Panc1 (cell line): ENCODE measurements at regions of chr1 and their contacts with region 1.

Region 1: GRCh38 chr1:212070720-212071302 is 35.3 kb downstream of the DTL start:
- DNase-seq: no peak
- ATAC-seq: peak; percentile 78
- H3K4me3 ChIP-seq: no peak overlapping the region
- H3K27ac ChIP-seq: no peak overlapping the region
- H3K4me1 ChIP-seq: no peaks in the 10 kb centered on the region
- H3K27me3 ChIP-seq: no peaks in the 10 kb centered on the region
- CTCF ChIP-seq: peak; percentile 65; the same call in 1 of the 2 replicates

Region 2: GRCh38 chr1:211991695-211992094 is 79.1 kb before region 1 on chr1:
- CTCF ChIA-PET with region 1: no interaction called
- POLR2A ChIA-PET with region 1: interaction called, 12 read pairs
- in situ Hi-C with region 1: no loop called
- intact Hi-C with region 1: no loop called
- DNase-seq: no peak
- ATAC-seq: no peak
- H3K4me3 ChIP-seq: no peak overlapping the region
- H3K27ac ChIP-seq: no peak overlapping the region
- H3K4me1 ChIP-seq: no peaks in the 10 kb centered on the region
- H3K27me3 ChIP-seq: no peaks in the 10 kb centered on the region
- CTCF ChIP-seq: no peak

Region 3: DNA sequence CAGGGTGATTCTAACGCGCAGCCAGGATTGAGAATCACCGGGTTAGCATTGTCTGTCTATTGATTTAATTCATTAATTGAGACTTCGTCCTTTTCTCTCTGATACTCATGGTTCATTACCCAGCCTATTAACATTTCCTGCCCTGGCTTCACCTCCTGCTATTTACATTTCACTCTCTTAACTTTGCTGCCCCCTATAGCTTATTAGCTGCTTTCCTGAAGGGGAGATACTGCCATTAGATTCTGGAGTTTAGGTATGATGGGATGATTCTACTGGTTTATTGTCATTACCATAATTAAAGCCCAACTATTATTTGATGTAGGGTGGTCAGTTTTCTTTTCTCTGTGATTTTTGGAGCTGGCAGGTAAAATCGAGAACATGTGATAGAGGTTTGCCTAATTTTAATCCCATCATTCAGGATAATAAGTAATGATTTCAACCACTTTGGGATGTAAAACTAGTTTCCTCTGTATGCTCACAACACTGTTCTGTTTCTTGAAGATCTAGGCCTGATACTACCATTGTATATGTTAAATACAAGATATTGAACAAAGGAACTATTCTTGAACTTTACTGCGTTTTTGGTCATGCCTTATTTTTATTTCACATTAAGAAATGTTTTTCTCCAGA is 220.8 kb after region 1 on chr1:
- CTCF ChIA-PET with region 1: interaction called, 6 read pairs
- POLR2A ChIA-PET with region 1: no interaction called
- in situ Hi-C with region 1: no loop called
- intact Hi-C with region 1: loop called (anchors 2 kb)
- DNase-seq: no peak
- ATAC-seq: peak; percentile 78
- H3K4me3 ChIP-seq: no peak overlapping the region
- H3K27ac ChIP-seq: no peak overlapping the region
- H3K4me1 ChIP-seq: peaks cover 45% of the 10 kb centered on the region
- H3K27me3 ChIP-seq: no peaks in the 10 kb centered on the region
- CTCF ChIP-seq: peak; percentile 71

Region 4: GRCh38 chr1:212440419-212440818 is 369.6 kb after region 1 on chr1:
- CTCF ChIA-PET with region 1: no interaction called
- POLR2A ChIA-PET with region 1: no interaction called
- in situ Hi-C with region 1: no loop called
- intact Hi-C with region 1: no loop called
- DNase-seq: no peak
- ATAC-seq: no peak
- H3K4me3 ChIP-seq: no peak overlapping the region
- H3K27ac ChIP-seq: no peak overlapping the region
- H3K4me1 ChIP-seq: no peaks in the 10 kb centered on the region
- H3K27me3 ChIP-seq: no peaks in the 10 kb centered on the region
- CTCF ChIP-seq: no peak